Activated CD4-positive, alpha-beta T cell treated with anti-CD3 and anti-CD28 coated beads for 36 hours (primary cell): ENCODE measurements at regions of chr19 and their contacts with region 1.

Region 1: GRCh38 chr19:29811125-29812079 is at the start of gene CCNE1:
- DNase-seq: peak; percentile 98
- ATAC-seq: peak; percentile 93
- H3K4me3 Mint-ChIP-seq: peak within 1 kb of the TSS; percentile 88
- H3K27ac Mint-ChIP-seq: peak within 1 kb of the TSS; percentile 94
- H3K4me1 Mint-ChIP-seq: peaks cover 15% of the 10 kb centered on the region
- H3K27me3 Mint-ChIP-seq: no peaks in the 10 kb centered on the region
- total RNA-seq, gene CCNE1: 29.4 to 30.4 TPM

Region 2: GRCh38 chr19:29201855-29202254 is 609.5 kb before region 1 on chr19:
- CTCF ChIA-PET with region 1: no interaction called
- POLR2A ChIA-PET with region 1: no interaction called
- intact Hi-C with region 1: no loop called
- DNase-seq: no peak
- ATAC-seq: no peak
- H3K4me3 Mint-ChIP-seq: no peak overlapping the region
- H3K27ac Mint-ChIP-seq: no peak overlapping the region
- H3K4me1 Mint-ChIP-seq: peaks cover 8% of the 10 kb centered on the region
- H3K27me3 Mint-ChIP-seq: no peaks in the 10 kb centered on the region

Region 3: DNA sequence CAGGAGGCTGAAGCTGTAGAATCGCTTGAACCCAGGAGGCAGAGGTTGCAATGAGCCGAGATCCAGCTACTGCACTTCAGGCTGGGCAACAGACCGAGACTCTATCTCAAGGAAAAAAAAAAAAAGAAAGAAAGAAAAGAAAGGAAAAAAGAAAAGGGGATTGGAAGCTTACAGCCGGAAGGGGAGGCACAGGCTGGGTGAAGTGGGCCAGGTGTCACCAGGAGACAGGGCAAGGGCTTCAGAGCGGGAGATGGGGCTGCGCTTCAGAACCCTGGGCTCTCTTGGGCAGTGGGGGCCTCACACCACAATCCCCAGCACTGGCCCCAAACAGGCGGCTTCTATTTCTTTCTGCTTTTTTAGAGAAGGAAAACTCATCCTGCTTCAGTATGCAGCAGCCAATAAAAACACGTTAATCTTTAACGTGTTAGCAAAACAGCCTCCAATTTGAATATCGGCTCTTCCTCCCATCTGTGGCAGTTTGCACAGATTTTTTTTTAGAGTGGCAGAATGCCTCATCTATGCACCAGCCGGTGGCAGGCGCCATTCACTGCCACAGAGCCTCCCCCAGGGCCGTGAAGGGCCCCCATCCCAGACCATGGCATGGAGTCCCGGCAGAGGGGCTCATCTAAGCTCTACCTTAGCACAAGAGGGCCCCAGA is 49.7 kb before region 1 on chr19:
- CTCF ChIA-PET with region 1: no interaction called
- POLR2A ChIA-PET with region 1: no interaction called
- intact Hi-C with region 1: loop called in 1 of 2 experiments (anchors 1 kb)
- DNase-seq: no peak
- ATAC-seq: no peak
- H3K4me3 Mint-ChIP-seq: no peak overlapping the region
- H3K27ac Mint-ChIP-seq: no peak overlapping the region
- H3K4me1 Mint-ChIP-seq: no peaks in the 10 kb centered on the region
- H3K27me3 Mint-ChIP-seq: peaks cover 1% of the 10 kb centered on the region

Region 4: DNA sequence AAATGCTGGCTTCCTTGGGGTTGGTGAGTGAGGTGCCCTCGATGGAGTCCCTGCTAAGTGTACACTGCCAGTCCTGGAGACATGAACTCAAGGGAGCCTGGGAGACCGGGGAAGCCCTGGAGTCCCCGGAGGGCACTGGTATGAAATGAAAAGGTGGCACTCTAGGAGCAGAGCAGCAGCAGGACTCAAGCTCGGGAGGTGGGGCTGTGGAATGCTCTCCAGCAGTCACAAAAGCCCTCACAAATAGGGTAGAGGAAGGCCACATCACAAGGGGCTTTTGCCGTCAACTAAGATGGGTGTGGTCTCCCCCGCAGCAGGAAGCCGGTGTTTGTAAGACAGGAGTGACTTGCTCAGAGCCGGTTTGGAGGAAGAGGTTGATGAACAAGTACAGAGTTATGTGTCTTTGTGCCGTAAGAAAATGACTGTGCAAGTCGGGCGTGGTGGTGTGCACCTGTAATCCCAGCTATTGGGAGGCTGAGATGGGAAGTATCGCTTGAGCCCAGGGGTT is 19.7 kb after region 1 on chr19:
- CTCF ChIA-PET with region 1: interaction called, 6 read pairs
- POLR2A ChIA-PET with region 1: no interaction called
- intact Hi-C with region 1: loop called in 1 of 2 experiments (anchors 1 kb)
- DNase-seq: peak; percentile 81
- ATAC-seq: peak; percentile 97
- H3K4me3 Mint-ChIP-seq: peak overlapping the region; percentile 56
- H3K27ac Mint-ChIP-seq: peak overlapping the region; percentile 96
- H3K4me1 Mint-ChIP-seq: peaks cover 50% of the 10 kb centered on the region
- H3K27me3 Mint-ChIP-seq: no peaks in the 10 kb centered on the region

Region 5: GRCh38 chr19:29837448-29837981 is 26.1 kb after region 1 on chr19:
- CTCF ChIA-PET with region 1: interaction called, 3 read pairs
- POLR2A ChIA-PET with region 1: interaction called, 4 read pairs
- intact Hi-C with region 1: loop called in 1 of 2 experiments (anchors 1 kb)
- DNase-seq: peak; percentile 76
- ATAC-seq: peak; percentile 81
- H3K4me3 Mint-ChIP-seq: peak overlapping the region; percentile 51
- H3K27ac Mint-ChIP-seq: peak overlapping the region; percentile 99
- H3K4me1 Mint-ChIP-seq: peaks cover 52% of the 10 kb centered on the region
- H3K27me3 Mint-ChIP-seq: no peaks in the 10 kb centered on the region

Region 6: DNA sequence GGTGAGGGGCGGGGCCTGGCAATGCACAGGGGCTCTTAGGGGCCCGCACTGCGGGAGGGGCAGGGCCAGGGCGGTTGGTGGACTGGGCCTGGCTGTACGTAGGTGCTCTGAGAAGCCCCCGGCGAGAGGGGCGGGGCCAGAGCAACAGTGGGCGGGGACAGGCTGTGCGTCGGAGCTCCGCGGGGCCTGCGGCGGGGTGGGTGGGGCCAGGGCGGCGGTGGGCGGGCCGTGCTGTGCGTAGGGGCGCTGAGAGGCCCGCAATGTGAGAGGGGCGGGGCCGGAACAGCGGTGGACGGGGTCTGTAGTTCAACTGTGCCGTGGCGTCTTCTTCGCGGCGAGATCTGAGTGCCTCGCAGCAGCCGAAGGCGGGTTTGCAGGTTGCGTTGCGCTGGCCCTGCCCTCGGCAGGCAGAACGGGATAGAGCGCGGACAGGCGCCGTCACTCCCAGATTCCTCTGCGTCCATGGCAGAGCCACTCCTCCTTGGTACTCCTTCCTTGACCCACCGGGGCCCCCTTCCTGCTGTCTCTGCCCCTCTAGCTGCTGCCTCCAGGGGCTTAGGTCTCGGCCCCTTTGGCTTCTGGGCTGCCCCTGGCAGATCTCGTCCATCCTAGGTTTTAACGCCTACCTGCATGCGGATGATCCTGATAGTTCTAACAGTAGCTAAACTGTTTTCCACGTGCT is 33.6 kb after region 1 on chr19:
- CTCF ChIA-PET with region 1: interaction called, 4 read pairs
- POLR2A ChIA-PET with region 1: interaction called, 4 read pairs
- intact Hi-C with region 1: loop called (anchors 1 kb)
- DNase-seq: peak; percentile 99
- ATAC-seq: peak; percentile 83
- H3K4me3 Mint-ChIP-seq: peak overlapping the region; percentile 83
- H3K27ac Mint-ChIP-seq: peak overlapping the region; percentile 83
- H3K4me1 Mint-ChIP-seq: peaks cover 11% of the 10 kb centered on the region
- H3K27me3 Mint-ChIP-seq: no peaks in the 10 kb centered on the region

Region 7: GRCh38 chr19:29936409-29936808 is 125.0 kb after region 1 on chr19:
- CTCF ChIA-PET with region 1: no interaction called
- POLR2A ChIA-PET with region 1: no interaction called
- intact Hi-C with region 1: no loop called
- DNase-seq: no peak
- ATAC-seq: no peak
- H3K4me3 Mint-ChIP-seq: no peak overlapping the region
- H3K27ac Mint-ChIP-seq: no peak overlapping the region
- H3K4me1 Mint-ChIP-seq: peaks cover 9% of the 10 kb centered on the region
- H3K27me3 Mint-ChIP-seq: no peaks in the 10 kb centered on the region